CD4-positive, alpha-beta T cell (primary cell): ENCODE measurements at regions of chr5 and their contacts with region 1.

Region 1: DNA sequence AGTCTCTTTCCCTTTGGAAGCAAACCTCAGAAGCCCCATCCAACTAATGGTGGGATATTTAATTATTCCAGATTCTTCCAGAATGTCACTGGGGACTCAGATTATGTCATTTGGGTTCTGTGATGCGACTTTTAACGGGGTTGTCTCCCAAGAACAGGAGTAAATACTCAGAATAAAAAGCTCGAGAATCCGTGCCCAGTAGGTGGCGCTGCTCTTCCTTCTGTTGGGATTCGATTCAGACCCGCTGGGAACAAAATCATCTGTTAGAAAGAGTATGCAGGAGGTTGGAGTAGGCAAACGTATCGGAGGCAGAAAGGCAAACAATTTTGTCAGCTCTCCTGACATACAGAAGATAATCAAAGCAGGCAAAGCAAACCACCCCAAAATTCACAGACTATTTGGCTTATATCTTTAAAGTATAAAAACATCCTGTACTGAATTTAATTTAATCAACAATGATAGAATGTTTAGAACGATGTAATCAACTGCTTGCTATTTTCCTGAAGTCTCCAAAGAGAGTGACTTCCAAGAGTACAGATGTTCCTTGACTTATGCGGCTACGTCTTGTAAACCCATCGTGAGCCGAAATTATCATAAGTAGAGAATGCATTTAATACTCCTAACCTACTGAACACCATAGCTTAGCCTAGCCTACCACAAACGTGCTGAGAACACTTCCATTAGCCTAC is 169.8 kb upstream of the RAI14 start:
- DNase-seq: peak; percentile 32 to 77 (median 50)
- ATAC-seq: no peak
- H3K4me3 ChIP-seq: no peak overlapping the region
- H3K4me3 Mint-ChIP-seq: no peak overlapping the region
- H3K27ac ChIP-seq: no peak overlapping the region
- H3K27ac Mint-ChIP-seq: no peak overlapping the region
- H3K4me1 ChIP-seq: no peaks in the 10 kb centered on the region
- H3K4me1 Mint-ChIP-seq: peaks cover 5% of the 10 kb centered on the region
- H3K27me3 ChIP-seq: no peaks in the 10 kb centered on the region
- H3K27me3 Mint-ChIP-seq: peaks cover 42% of the 10 kb centered on the region
- CTCF ChIP-seq: peak; percentile 86

Region 2: DNA sequence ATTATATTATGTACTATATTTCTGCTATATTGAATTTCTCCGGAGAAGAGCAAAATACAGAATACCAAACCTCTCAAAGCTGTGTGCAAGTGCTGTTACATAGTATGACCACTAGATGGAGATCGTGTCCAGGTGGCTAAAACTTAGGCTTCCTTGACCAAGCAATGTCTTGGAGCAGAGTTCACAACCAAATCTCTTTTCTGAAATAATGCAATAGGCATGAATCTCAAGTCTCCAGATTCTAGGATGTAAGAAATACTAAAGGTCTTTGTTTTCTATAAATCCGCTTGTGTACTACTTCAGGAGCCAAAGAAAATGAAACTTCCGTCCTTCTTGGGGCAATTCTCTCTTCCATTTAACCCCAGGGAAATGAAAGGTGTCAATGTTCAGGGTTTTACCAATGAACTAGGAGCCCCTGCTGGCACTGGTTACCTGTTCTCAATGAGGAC is 11.7 kb before region 1 on chr5:
- CTCF ChIA-PET with region 1: interaction called, 10 read pairs
- POLR2A ChIA-PET with region 1: no interaction called
- intact Hi-C with region 1: no loop called
- DNase-seq: peak in 4 of 14 experiments; percentile 15 to 56 (median 42)
- ATAC-seq: peak; percentile 46
- H3K4me3 ChIP-seq: no peak overlapping the region
- H3K4me3 Mint-ChIP-seq: no peak overlapping the region
- H3K27ac ChIP-seq: no peak overlapping the region
- H3K27ac Mint-ChIP-seq: no peak overlapping the region
- H3K4me1 ChIP-seq: no peaks in the 10 kb centered on the region
- H3K4me1 Mint-ChIP-seq: no peaks in the 10 kb centered on the region
- H3K27me3 ChIP-seq: no peaks in the 10 kb centered on the region
- H3K27me3 Mint-ChIP-seq: peaks cover 18% of the 10 kb centered on the region
- CTCF ChIP-seq: peak; percentile 95

Region 3: DNA sequence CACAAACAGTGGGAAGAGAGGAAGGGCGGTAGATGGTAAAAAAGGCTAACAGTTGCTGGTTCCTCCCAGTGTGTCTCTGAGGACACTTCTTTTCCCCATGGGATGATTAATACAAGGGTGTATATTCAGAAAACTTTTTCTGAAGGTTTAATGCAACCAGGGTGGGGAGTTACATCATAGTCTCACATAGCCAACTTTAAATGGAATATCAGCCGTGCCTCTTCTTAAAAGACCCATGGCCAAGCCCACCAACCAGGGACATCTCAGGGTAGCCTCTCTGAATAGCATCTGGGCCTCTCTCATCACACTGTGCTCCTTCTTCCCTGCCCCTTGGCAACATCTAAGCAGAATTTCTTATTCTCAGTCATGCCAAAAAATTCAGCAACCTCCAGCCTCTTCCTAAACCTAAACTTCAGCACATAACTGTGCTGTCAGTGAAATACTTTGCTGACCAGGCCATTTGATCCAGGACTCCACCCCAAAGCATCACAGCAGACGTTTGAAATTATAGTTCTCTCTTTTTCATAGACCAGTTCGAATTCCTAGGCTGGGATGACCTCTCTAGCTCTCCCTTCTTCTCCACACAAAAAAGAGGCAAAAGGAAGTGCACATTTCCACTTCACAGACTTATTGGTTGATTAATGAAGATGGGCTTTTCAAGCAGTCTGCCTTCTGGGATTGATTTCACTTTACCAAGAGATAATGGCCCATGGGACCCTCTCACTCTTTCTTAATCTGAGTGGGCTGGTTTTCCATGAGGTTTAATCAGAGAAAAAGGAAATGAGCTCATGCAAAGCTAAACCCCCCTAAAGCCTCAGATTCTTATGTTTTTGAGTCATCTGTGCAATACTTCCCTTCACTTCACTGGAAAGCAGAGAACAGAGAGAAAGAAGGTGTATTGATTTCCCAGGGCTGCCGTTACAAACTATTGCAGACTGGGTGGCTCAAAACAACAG is 84.7 kb after region 1 on chr5:
- CTCF ChIA-PET with region 1: no interaction called
- POLR2A ChIA-PET with region 1: no interaction called
- intact Hi-C with region 1: no loop called
- DNase-seq: no peak
- ATAC-seq: no peak
- H3K4me3 ChIP-seq: no peak overlapping the region
- H3K4me3 Mint-ChIP-seq: no peak overlapping the region
- H3K27ac ChIP-seq: no peak overlapping the region
- H3K27ac Mint-ChIP-seq: no peak overlapping the region
- H3K4me1 ChIP-seq: no peaks in the 10 kb centered on the region
- H3K4me1 Mint-ChIP-seq: no peaks in the 10 kb centered on the region
- H3K27me3 ChIP-seq: no peaks in the 10 kb centered on the region
- H3K27me3 Mint-ChIP-seq: peaks cover 8% of the 10 kb centered on the region
- CTCF ChIP-seq: no peak

Region 4: DNA sequence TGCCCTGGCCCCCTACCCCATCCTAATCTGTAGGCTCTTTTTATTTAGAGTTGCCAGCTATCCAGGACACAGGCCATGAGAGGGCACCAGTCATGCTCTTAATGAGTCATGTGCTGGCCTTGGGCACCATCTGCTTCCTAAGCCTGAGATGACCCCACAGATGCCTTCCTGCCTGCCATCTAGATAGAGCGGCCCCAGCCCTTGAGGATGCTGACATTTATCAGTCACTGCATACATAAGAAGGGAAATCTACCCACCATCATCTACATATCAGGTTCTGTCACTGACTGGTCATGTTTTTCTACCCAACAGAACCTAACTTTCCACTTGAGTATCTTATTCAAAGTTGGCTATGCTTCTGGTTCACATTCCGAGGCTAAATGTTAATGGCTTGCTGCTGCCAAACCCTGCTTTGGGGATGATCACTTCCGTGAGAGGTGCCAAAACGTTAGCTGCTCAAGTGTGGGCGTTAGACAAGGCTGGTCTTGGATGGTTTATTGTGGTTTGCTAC is 302.8 kb after region 1 on chr5:
- CTCF ChIA-PET with region 1: no interaction called
- POLR2A ChIA-PET with region 1: no interaction called
- intact Hi-C with region 1: no loop called
- DNase-seq: no peak
- ATAC-seq: no peak
- H3K4me3 ChIP-seq: no peak overlapping the region
- H3K4me3 Mint-ChIP-seq: no peak overlapping the region
- H3K27ac ChIP-seq: no peak overlapping the region
- H3K27ac Mint-ChIP-seq: no peak overlapping the region
- H3K4me1 ChIP-seq: no peaks in the 10 kb centered on the region
- H3K4me1 Mint-ChIP-seq: no peaks in the 10 kb centered on the region
- H3K27me3 ChIP-seq: no peaks in the 10 kb centered on the region
- H3K27me3 Mint-ChIP-seq: peaks cover 21% of the 10 kb centered on the region
- CTCF ChIP-seq: no peak

Region 5: DNA sequence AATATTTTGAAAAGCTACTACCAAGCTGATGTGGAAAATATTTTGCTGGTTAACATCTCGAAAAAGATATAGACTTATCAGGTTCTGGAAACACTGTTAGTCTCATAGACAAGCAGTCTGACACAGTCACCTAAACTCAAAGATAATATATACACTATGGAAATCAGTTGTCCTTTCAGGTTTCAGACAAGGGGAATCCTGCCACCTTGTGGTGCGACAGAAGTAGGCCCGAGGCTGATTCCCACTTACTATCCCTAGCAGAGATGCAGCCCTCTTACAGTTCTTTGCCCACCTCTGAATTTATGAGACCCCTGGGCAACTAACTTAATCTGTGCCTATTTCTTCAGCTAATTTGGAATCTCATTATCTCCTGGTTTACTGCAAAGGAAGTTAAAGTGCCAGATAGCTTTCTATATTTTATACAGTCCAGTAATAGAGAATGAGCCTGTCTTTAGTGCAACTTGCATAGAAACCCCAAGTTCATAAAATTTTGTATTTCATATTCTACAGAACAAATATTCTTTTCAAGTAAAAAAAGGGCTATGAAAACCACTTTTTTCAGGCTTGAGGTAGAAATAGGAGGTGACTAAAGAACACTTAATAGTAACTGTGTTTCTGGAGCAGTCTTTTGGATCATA is 412.1 kb after region 1 on chr5:
- CTCF ChIA-PET with region 1: interaction called, 6 read pairs
- POLR2A ChIA-PET with region 1: no interaction called
- intact Hi-C with region 1: loop called (anchors 1 kb)
- DNase-seq: peak; percentile 38 to 78 (median 53)
- ATAC-seq: peak; percentile 73
- H3K4me3 ChIP-seq: no peak overlapping the region
- H3K4me3 Mint-ChIP-seq: no peak overlapping the region
- H3K27ac ChIP-seq: no peak overlapping the region
- H3K27ac Mint-ChIP-seq: no peak overlapping the region
- H3K4me1 ChIP-seq: no peaks in the 10 kb centered on the region
- H3K4me1 Mint-ChIP-seq: no peaks in the 10 kb centered on the region
- H3K27me3 ChIP-seq: no peaks in the 10 kb centered on the region
- H3K27me3 Mint-ChIP-seq: no peaks in the 10 kb centered on the region
- CTCF ChIP-seq: peak; percentile 84

Region 6: DNA sequence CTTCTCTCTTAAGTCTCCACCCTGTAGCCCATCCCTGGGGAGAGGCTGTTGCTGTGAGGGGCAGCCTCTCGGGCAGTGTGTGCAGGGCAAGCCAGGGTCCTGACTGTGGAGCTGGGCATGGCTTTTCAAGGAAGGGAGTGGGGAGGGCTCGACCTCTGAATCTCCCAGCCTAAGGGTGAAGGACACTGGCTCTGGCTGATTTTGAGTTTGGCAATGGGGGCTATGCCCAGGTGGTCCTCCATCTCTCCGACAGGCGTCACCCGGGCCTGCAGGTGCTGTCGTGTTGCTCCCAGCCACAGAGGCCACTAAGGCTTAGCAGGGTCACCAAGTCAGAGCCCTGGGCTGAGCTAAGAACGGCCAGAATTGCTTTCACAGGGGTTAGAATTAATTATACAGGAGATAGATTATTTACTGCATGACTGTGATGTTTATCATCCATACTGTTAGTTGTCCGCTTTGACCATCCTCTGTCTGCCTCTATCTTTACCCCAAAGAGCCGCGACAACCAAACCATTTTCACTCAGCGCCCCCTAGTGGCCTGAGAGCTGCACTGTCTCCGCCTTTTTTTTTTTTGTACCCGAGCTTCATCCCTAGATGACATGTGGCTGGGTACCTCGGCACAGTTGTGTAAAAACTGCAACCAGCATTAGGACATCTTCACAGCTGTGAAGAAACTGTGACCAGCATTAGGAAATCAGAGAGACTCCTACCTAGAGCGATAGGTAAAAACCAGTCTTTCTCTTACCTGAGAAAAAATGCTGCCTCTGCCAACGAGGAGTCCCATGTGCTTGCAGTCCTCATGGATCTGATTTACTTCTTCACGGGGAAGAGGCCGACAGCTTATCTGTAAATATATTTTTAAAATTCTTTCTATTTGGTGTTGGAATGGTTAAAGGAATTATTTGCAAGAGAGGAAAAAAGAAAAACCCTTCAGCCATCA is 517.0 kb after region 1 on chr5:
- CTCF ChIA-PET with region 1: no interaction called
- POLR2A ChIA-PET with region 1: no interaction called
- intact Hi-C with region 1: loop called in 1 of 2 experiments (anchors 5 kb)
- DNase-seq: peak in 13 of 14 experiments; percentile 19 to 63 (median 29)
- ATAC-seq: no peak
- H3K4me3 ChIP-seq: no peak overlapping the region
- H3K4me3 Mint-ChIP-seq: no peak overlapping the region
- H3K27ac ChIP-seq: no peak overlapping the region
- H3K27ac Mint-ChIP-seq: no peak overlapping the region
- H3K4me1 ChIP-seq: no peaks in the 10 kb centered on the region
- H3K4me1 Mint-ChIP-seq: no peaks in the 10 kb centered on the region
- H3K27me3 ChIP-seq: peaks cover 5 to 12% of the 10 kb centered on the region in 2 experiments
- H3K27me3 Mint-ChIP-seq: peaks cover 60% of the 10 kb centered on the region
- CTCF ChIP-seq: peak; percentile 75

Region 7: GRCh38 chr5:35593338-35593737 is 1107.0 kb after region 1 on chr5:
- CTCF ChIA-PET with region 1: no interaction called
- POLR2A ChIA-PET with region 1: no interaction called
- intact Hi-C with region 1: no loop called
- DNase-seq: no peak
- ATAC-seq: no peak
- H3K4me3 ChIP-seq: no peak overlapping the region
- H3K4me3 Mint-ChIP-seq: no peak overlapping the region
- H3K27ac ChIP-seq: no peak overlapping the region
- H3K27ac Mint-ChIP-seq: no peak overlapping the region
- H3K4me1 ChIP-seq: no peaks in the 10 kb centered on the region
- H3K4me1 Mint-ChIP-seq: no peaks in the 10 kb centered on the region
- H3K27me3 ChIP-seq: peaks cover 0 to 8% of the 10 kb centered on the region in 2 experiments
- H3K27me3 Mint-ChIP-seq: peaks cover 46% of the 10 kb centered on the region
- CTCF ChIP-seq: no peak